ENCODE measurements at regions of chr4 and their contacts with region 1.

Region 1: DNA sequence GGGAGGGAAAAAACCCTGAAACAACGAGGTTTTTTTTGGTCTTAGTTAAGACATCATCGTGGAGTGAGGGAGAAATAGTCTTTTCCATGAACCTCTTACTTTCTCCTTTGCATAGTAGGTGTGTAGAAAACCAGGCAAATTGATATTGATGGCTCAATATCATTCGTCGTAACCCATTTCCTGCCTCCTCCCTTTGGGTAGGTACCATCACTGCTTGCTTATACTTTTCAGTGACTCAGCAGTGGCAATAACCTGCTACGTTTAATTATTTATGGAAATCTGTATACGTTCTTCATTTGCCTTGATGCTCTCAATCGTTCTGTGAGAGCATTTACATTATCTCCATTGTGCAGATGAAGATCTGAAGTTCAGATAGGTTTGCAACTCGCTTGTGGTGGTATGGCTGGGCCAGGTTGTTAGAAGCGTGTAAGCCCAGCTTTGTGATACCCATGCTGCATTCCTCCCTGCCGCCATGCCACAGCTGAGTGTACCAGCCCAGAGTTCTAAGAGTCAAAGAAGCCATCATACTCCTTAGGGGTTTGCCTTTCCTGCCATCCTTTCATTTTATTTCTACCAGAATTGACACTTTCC is 212.9 kb downstream of the ARHGAP10 start:
- DNase-seq: no peak
- H3K4me3 ChIP-seq: no peak overlapping the region
- H3K27ac ChIP-seq: no peak overlapping the region
- H3K4me1 ChIP-seq: no peaks in the 10 kb centered on the region
- H3K27me3 ChIP-seq: no peaks in the 10 kb centered on the region
- CTCF ChIP-seq: no peak
- POLR2A ChIP-seq: no peak

Region 2: DNA sequence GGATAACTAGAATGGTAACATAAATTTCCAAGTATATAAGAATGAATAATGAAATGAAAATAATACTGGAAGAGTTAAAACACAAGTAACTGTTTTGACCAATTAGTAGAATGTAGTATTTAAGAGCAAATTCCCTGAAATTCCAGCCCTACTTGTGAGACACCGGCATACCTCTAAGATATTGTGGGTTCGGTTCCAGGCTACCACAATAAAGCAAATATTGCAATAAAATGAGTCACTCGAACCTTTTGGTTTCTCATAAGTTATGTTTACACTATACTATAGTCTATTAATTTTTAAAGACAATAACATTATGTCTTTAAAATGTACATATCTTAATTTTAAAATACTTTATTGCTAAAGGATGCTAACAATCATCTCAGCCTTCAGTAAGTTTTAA is 1886.1 kb after region 1 on chr4:
- intact Hi-C with region 1: loop called (anchors 5 kb)
- DNase-seq: no peak
- H3K4me3 ChIP-seq: no peak overlapping the region
- H3K27ac ChIP-seq: no peak overlapping the region
- H3K4me1 ChIP-seq: no peaks in the 10 kb centered on the region
- H3K27me3 ChIP-seq: no peaks in the 10 kb centered on the region
- CTCF ChIP-seq: no peak
- POLR2A ChIP-seq: no peak

Measured in breast epithelium (tissue), 4 donors.